Dendritic cell treated with granulocyte-macrophage colony-stimulating factor and Interleukin-4, amounts not matched to agents 40 ng/mL and 50 ng/mL, for 4 days (primary cell): ENCODE measurements at regions of chr6 and their contacts with region 1.

Region 1: GRCh38 chr6:134938896-134939295 is 11.0 kb downstream of the ALDH8A1 start:
- H3K4me3 Mint-ChIP-seq: no peak overlapping the region
- H3K27ac Mint-ChIP-seq: no peak overlapping the region
- H3K4me1 Mint-ChIP-seq: peaks cover 8% of the 10 kb centered on the region
- H3K27me3 Mint-ChIP-seq: no peaks in the 10 kb centered on the region

Region 2: GRCh38 chr6:133923938-133924593 is 1014.8 kb before region 1 on chr6:
- intact Hi-C with region 1: loop called (anchors 5 kb)
- H3K4me3 Mint-ChIP-seq: no peak overlapping the region
- H3K27ac Mint-ChIP-seq: no peak overlapping the region
- H3K4me1 Mint-ChIP-seq: no peaks in the 10 kb centered on the region
- H3K27me3 Mint-ChIP-seq: peaks cover 43% of the 10 kb centered on the region

Region 3: GRCh38 chr6:134111062-134111677 is 827.7 kb before region 1 on chr6:
- intact Hi-C with region 1: loop called (anchors 2 kb)
- H3K4me3 Mint-ChIP-seq: no peak overlapping the region
- H3K27ac Mint-ChIP-seq: no peak overlapping the region
- H3K4me1 Mint-ChIP-seq: peaks cover 10% of the 10 kb centered on the region
- H3K27me3 Mint-ChIP-seq: peaks cover 21% of the 10 kb centered on the region

Region 4: GRCh38 chr6:134161036-134161435 is 777.9 kb before region 1 on chr6:
- intact Hi-C with region 1: loop called (anchors 1 kb)
- H3K4me3 Mint-ChIP-seq: no peak overlapping the region
- H3K27ac Mint-ChIP-seq: no peak overlapping the region
- H3K4me1 Mint-ChIP-seq: no peaks in the 10 kb centered on the region
- H3K27me3 Mint-ChIP-seq: peaks cover 12% of the 10 kb centered on the region

Region 5: GRCh38 chr6:134835993-134836392 is 102.9 kb before region 1 on chr6:
- intact Hi-C with region 1: loop called (anchors 10 kb)
- H3K4me3 Mint-ChIP-seq: no peak overlapping the region
- H3K27ac Mint-ChIP-seq: no peak overlapping the region
- H3K4me1 Mint-ChIP-seq: no peaks in the 10 kb centered on the region
- H3K27me3 Mint-ChIP-seq: no peaks in the 10 kb centered on the region

Region 6: GRCh38 chr6:134967711-134968110 is 28.8 kb after region 1 on chr6:
- intact Hi-C with region 1: no loop called
- H3K4me3 Mint-ChIP-seq: no peak overlapping the region
- H3K27ac Mint-ChIP-seq: no peak overlapping the region
- H3K4me1 Mint-ChIP-seq: no peaks in the 10 kb centered on the region
- H3K27me3 Mint-ChIP-seq: no peaks in the 10 kb centered on the region